ENCODE measurements at regions of chr17 and their contacts with region 1.

Region 1: GRCh38 chr17:6843241-6843880 is 11.8 kb upstream of the TEKT1 start:
- DNase-seq: peak in 1 of 2 experiments; percentile 74
- ATAC-seq: peak; percentile 73 to 80; a peak in 5 of 6 replicates
- H3K4me3 ChIP-seq: no peak overlapping the region
- H3K27ac ChIP-seq: peak overlapping the region in 1 of 2 experiments; percentile 44; a peak in 3 of 6 replicates
- H3K4me1 ChIP-seq: peaks cover 9% of the 10 kb centered on the region; the same call in 2 of the 3 replicates
- CTCF ChIP-seq: peak; percentile 92
- EP300 ChIP-seq: no peak
- POLR2A ChIP-seq: no peak
- RAD21 ChIP-seq: peak; percentile 84 to 91

Region 2: GRCh38 chr17:6153375-6153774 is 690.0 kb before region 1 on chr17:
- CTCF ChIA-PET with region 1: no interaction called
- POLR2A ChIA-PET with region 1: no interaction called
- DNase-seq: no peak
- ATAC-seq: no peak
- H3K4me3 ChIP-seq: no peak overlapping the region
- H3K27ac ChIP-seq: no peak overlapping the region
- H3K4me1 ChIP-seq: no peaks in the 10 kb centered on the region
- CTCF ChIP-seq: no peak
- EP300 ChIP-seq: no peak
- POLR2A ChIP-seq: no peak
- RAD21 ChIP-seq: no peak

Region 3: DNA sequence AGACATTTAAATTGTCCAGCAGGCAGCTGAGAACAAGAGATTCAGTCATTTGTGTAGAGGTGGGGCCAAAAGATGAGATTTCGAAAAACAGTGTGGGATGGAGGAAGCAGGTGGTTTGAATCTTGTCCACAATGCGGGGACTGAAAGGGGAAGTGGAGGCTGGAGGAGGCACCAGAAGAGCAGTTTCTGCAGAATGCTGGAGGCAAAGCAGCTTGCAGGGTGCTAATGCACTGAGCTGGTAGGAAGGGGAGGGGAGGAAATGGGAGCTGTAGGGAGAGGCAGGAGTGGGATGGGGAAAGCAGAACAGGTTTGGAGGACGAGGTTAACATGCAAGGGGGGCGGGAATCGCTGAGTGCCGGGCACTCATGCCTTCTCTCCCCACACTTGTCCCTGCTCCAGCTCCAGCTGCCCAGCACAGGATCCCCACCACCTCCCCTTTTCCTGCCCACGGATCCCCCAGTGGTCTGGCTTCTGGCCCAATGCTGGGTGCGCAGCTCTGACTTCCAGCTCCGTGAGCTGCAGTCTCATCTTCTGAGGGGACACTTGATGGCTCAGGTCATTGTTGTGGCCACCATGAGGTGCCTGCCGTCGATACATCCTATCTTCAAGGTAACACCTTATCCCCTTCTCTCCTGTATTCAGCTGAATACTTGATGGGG is 182.4 kb before region 1 on chr17:
- CTCF ChIA-PET with region 1: interaction called, 39 read pairs
- POLR2A ChIA-PET with region 1: no interaction called
- DNase-seq: no peak
- ATAC-seq: no peak
- H3K4me3 ChIP-seq: no peak overlapping the region
- H3K27ac ChIP-seq: no peak overlapping the region
- H3K4me1 ChIP-seq: no peaks in the 10 kb centered on the region
- CTCF ChIP-seq: no peak
- EP300 ChIP-seq: no peak
- POLR2A ChIP-seq: no peak
- RAD21 ChIP-seq: no peak

Region 4: GRCh38 chr17:6786618-6787017 is 56.7 kb before region 1 on chr17:
- CTCF ChIA-PET with region 1: interaction called, 12 read pairs
- POLR2A ChIA-PET with region 1: no interaction called
- DNase-seq: peak in 1 of 2 experiments; percentile 14
- ATAC-seq: peak in 1 of 2 experiments; percentile 59; a peak in 1 of 6 replicates
- H3K4me3 ChIP-seq: no peak overlapping the region
- H3K27ac ChIP-seq: no peak overlapping the region
- H3K4me1 ChIP-seq: no peaks in the 10 kb centered on the region
- CTCF ChIP-seq: no peak
- EP300 ChIP-seq: no peak
- POLR2A ChIP-seq: no peak
- RAD21 ChIP-seq: no peak

Region 5: GRCh38 chr17:6853764-6854442 is 10.5 kb after region 1 on chr17:
- CTCF ChIA-PET with region 1: interaction called, 45 read pairs
- POLR2A ChIA-PET with region 1: no interaction called
- DNase-seq: peak; percentile 46 to 73
- ATAC-seq: peak; percentile 92 to 93; a peak in 5 of 6 replicates
- H3K4me3 ChIP-seq: peak overlapping the region; percentile 46
- H3K27ac ChIP-seq: peak overlapping the region; percentile 83 to 88
- H3K4me1 ChIP-seq: no peaks in the 10 kb centered on the region; the same call in 1 of the 3 replicates
- CTCF ChIP-seq: peak; percentile 40; the same call in 2 of the 3 replicates
- EP300 ChIP-seq: no peak
- POLR2A ChIP-seq: no peak; the same call in 1 of the 2 replicates
- RAD21 ChIP-seq: 0 out of 5 replicates have a peak, but pooled peaks of 1 of the 2 experiments have one; percentile 4

Region 6: DNA sequence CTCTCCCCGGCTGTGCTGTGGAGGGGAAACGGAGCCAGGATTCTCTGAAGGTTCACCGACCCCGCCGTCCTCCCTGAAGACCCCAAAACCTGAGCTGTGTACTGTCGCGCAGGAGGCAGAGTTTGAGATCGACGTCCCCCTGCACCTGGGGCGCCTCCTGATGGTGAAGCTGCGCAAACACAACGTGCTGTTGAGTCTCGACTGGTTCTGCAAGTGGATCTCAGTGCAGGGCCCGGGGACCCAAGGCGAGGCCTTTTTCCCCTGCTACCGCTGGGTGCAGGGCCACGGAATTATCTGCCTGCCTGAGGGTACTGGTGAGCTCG is 50.8 kb after region 1 on chr17:
- CTCF ChIA-PET with region 1: interaction called, 40 read pairs
- POLR2A ChIA-PET with region 1: no interaction called
- DNase-seq: no peak
- ATAC-seq: no peak
- H3K4me3 ChIP-seq: no peak overlapping the region
- H3K27ac ChIP-seq: no peak overlapping the region
- H3K4me1 ChIP-seq: no peaks in the 10 kb centered on the region
- CTCF ChIP-seq: no peak
- EP300 ChIP-seq: no peak
- POLR2A ChIP-seq: no peak
- RAD21 ChIP-seq: peak in 1 of 2 experiments; percentile 34; a peak in 2 of 5 replicates

Region 7: DNA sequence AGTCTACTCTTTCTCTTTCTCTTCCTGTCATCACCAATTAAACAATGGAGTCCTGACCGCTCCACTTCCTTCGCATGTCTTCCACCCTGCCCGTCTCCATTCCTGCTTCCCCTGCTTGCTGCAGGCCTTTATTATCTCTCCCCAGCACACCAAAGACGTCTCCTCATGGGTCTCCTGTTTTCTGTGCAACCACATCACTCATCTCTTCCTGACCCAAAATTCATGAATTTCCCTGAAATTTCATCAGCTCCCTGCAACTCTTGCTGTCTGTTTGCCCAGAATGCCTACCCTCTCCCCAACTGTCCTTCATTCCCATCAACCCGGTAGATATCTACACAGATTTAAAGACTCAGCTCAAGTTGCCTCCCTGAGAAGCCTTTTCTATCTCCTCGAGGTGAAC is 75.8 kb after region 1 on chr17:
- CTCF ChIA-PET with region 1: interaction called, 61 read pairs
- POLR2A ChIA-PET with region 1: interaction called, 3 read pairs
- DNase-seq: no peak
- ATAC-seq: no peak
- H3K4me3 ChIP-seq: no peak overlapping the region
- H3K27ac ChIP-seq: no peak overlapping the region
- H3K4me1 ChIP-seq: peaks cover 3% of the 10 kb centered on the region; the same call in 2 of the 3 replicates
- CTCF ChIP-seq: no peak
- EP300 ChIP-seq: no peak
- POLR2A ChIP-seq: no peak
- RAD21 ChIP-seq: no peak

Region 8: DNA sequence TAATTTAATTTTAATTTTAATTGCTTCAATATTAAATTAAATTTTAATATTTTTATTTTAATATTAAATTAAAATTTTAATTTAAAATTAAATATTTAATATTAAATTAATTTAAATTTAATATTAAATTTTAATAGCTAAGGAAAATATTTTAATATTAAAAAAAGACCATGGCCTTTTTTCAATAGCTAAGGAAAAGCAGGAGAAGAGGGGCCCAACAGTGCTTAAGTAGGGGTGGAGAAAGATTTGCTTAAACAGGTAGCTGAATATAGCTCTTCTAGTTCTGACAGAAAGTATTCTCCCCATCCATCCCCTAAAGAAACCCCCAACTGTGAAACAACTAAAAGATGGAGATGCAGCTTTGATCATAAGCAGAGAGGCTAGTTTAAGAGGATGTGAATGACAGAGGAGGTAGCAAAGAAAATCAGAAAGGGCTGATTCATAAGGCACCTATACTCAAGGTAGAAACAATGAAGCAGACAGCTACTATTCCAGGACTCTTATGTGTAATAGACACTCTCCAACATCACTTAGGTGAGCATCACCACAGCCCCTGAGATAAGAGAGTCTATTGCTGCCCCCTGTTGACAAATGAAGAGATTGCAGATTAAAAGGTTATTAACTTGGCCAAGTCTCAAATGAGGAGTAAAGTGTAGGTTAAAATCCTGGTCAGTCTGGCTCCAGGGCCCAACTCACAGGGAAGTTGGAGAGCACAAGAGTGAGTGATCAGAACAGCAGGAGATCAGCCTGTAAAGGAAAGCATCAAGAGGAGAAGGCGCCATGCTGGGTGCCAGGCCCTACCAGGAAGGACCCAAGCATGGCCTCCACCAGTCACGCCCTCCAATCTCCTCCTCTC is 161.3 kb after region 1 on chr17:
- CTCF ChIA-PET with region 1: interaction called, 252 read pairs
- POLR2A ChIA-PET with region 1: interaction called, 6 read pairs
- DNase-seq: peak; percentile 84 to 85
- ATAC-seq: peak; percentile 91
- H3K4me3 ChIP-seq: no peak overlapping the region
- H3K27ac ChIP-seq: no peak overlapping the region
- H3K4me1 ChIP-seq: no peaks in the 10 kb centered on the region
- CTCF ChIP-seq: peak; percentile 96
- EP300 ChIP-seq: no peak
- POLR2A ChIP-seq: no peak
- RAD21 ChIP-seq: peak; percentile 96 to 97

Measured in A549 (cell line).